ENCODE measurements at regions of chr16 and their contacts with region 1.

Region 1: DNA sequence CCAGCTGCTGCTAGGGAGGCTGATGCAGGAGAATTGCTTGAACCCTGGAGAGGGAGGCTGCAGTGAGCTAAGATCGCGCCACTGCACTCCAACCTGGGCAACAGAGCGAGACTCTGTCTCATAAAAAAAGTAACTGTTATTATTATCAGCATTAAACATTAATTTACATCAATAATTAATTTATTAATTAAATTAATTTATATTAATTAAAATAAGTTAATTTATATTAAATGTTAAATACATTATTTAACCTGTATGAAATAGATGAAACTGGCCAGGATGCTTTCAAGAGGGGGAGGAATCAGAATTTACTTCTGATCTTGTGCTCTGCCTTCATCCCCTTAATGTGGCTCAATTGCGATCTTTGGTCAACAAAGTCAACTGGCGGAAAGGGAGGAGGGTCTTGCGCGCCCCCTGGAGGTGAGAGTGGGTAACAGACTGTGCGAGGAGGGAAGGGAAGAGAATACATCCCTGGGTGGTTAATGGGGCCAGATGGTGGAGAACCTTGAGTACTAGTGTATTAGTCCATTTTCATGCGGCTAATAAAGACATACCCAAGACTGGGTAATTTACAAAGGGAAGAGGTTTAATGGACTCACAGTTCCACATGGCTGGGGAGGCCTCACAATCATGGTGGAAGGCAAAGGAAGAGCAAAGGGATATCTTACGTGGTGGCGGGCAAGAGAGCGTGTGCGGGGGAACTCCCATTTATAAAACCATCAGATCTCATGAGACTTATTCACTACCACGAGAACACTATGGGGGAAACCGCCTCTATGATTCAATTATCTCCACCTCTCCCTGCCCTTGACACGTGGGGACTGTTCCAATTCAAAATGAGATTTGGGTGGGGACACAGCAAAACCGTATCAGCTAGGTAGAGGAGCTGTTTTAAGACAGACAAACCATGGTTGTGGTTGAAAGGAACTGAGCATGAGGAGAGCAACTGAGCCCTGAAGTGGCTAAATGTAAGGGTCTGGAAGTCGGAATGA is 15.7 kb upstream of the CPPED1 start:
- DNase-seq: peak; percentile 72 to 87
- ATAC-seq: peak; percentile 84
- H3K4me3 ChIP-seq: no peak overlapping the region
- H3K27ac ChIP-seq: no peak overlapping the region
- H3K4me1 ChIP-seq: no peaks in the 10 kb centered on the region
- H3K27me3 ChIP-seq: no peaks in the 10 kb centered on the region

Region 2: DNA sequence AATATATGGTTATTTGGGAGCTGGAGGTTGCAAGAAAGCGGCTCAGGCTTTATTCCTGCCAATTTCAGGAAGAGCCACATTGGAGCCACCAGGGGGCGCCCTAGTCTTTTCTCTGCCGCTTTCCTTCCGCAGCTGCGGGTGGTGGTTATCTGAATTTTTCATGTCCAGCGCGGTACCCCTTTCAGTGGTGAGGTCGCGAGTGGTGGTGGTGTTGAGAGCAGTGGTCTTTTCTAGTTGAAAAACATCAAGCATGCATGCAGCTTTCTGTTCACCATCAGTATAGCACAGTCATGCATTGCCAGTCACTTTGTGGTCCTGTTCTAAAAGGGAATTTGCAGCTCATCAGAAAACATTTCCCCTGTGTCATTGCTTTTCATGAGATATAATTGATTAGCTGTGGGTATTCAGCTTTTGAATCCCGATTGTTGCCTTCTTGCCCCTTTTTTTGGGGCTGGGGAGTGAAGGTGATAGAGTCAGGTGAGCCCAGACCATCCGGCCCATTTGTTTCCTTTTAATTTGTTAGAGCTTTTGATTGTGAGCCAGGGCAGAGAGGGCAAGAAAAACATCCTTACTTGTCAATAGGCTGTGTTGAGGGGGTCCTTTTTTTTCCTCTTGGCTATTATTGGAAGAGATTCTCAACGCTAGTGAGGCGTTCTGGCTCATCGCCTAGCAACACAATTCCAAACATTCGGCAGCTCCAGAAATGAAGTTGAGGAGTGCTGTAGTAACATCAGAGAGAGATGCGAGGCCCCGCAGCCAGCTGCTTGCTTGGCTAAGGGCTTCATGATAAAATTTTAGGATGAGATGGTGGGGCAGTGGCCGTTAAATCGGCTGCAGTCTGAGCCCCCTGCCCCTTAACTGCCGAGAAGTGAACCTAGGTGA is 723.9 kb before region 1 on chr16:
- intact Hi-C with region 1: loop called in 1 of 2 experiments (anchors 5 kb)
- DNase-seq: peak; percentile 72 to 90
- ATAC-seq: peak; percentile 68
- H3K4me3 ChIP-seq: no peak overlapping the region
- H3K27ac ChIP-seq: no peak overlapping the region
- H3K4me1 ChIP-seq: peaks cover 0 to 2% of the 10 kb centered on the region in 2 donors
- H3K27me3 ChIP-seq: no peaks in the 10 kb centered on the region

Region 3: GRCh38 chr16:12455287-12455798 is 364.1 kb before region 1 on chr16:
- intact Hi-C with region 1: loop called (anchors 5 to 10 kb)
- DNase-seq: peak; percentile 69 to 81
- ATAC-seq: peak; percentile 62
- H3K4me3 ChIP-seq: no peak overlapping the region
- H3K27ac ChIP-seq: no peak overlapping the region
- H3K4me1 ChIP-seq: peaks cover 0 to 1% of the 10 kb centered on the region in 2 donors
- H3K27me3 ChIP-seq: no peaks in the 10 kb centered on the region

Region 4: GRCh38 chr16:12925026-12925800 is 105.8 kb after region 1 on chr16:
- intact Hi-C with region 1: no loop called
- DNase-seq: no peak
- ATAC-seq: no peak
- H3K4me3 ChIP-seq: no peak overlapping the region
- H3K27ac ChIP-seq: no peak overlapping the region
- H3K4me1 ChIP-seq: no peaks in the 10 kb centered on the region
- H3K27me3 ChIP-seq: no peaks in the 10 kb centered on the region